H1 (cell line): ENCODE measurements at regions of chr1 and their contacts with region 1.

Region 1: DNA sequence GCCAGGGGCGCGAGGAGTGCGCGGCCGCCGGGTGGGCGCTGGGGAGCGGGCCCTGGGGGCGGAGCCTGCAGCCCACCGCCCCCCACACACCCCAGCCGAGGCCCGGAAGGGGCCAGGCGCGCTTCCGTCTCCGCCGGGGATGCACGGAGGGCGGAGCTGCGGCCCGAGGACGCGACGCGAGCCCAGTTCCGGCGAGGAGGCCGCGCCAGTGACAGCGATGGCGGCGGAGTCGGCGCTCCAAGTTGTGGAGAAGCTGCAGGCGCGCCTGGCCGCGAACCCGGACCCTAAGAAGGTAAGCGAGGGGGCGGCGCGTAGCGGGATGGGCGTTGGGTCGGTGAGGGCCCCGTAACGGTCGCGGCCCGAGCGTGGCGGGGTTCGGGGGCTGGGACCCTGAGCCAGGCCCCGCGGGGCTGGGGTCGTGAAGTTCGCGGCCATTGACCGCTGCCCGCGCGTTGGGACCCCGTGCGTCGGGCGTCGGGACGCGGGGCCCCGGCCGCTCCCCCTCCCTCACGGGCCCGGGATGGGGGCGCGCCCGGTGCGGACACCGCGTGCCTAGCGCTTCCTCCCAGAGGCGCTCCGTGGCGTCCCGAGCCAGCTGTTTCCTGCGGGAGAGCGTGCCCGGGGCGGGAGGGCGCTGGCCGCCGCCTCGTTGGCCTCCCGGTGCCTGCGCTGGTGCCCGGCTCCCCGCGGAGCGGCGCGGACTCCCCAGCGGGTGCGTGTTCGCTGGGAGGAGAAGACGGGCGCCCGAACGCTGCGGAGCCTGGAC is at the start of gene ELOA:
- DNase-seq: peak; percentile 23 to 85
- H3K4me3 ChIP-seq: peak within 1 kb of the TSS; percentile 79 to 88 (median 84)
- H3K27ac ChIP-seq: peak within 1 kb of the TSS; percentile 61; the same call in 1 of the 2 replicates
- H3K4me1 ChIP-seq: peaks cover 3 to 10% (median 3%) of the 10 kb centered on the region in 4 experiments; a peak in 4 of 7 replicates
- H3K27me3 ChIP-seq: no peaks in the 10 kb centered on the region
- CTCF ChIP-seq: no peak
- EP300 ChIP-seq: no peak
- POLR2A ChIP-seq: peak; percentile 72 to 74; a peak in 2 of 3 replicates
- RAD21 ChIP-seq: no peak
- total RNA-seq, gene ELOA: 56.9 and 61.1 TPM in 2 replicates

Region 2: DNA sequence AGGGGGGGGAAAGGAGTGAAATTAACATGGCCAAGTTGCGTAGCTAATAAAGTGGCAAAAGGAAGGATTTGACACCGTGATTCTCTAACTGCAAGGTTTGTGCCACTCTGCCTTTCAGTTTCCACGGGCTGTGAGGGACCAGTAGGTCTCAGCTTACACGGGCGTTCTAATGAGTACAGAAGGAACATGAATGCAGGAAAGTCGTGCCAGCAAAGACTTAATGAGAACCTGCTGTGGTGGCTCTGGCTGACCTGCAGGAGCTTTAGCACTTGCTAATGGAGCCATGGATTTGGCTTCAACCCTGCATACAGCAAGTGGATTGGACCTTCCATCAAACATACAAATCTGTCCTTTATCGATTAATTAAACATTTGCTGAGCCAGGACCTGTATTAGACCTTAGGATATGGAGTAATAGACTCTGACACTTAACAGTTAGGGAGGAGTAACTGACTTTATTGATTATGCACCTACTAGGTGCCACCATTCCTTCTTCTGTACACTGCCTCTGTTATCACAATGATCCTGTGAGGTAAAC is 19.6 kb after region 1 on chr1:
- CTCF ChIA-PET with region 1: interaction called, 9 read pairs
- POLR2A ChIA-PET with region 1: interaction called, 19 read pairs
- DNase-seq: no peak
- H3K4me3 ChIP-seq: no peak overlapping the region
- H3K27ac ChIP-seq: no peak overlapping the region
- H3K4me1 ChIP-seq: no peaks in the 10 kb centered on the region
- H3K27me3 ChIP-seq: no peaks in the 10 kb centered on the region
- CTCF ChIP-seq: no peak
- EP300 ChIP-seq: no peak
- POLR2A ChIP-seq: no peak
- RAD21 ChIP-seq: no peak